ENCODE measurements at regions of chr12 and their contacts with region 1.

Region 1: GRCh38 chr12:47032644-47033043 is 46.8 kb upstream of the PCED1B start:
- DNase-seq: peak; percentile 78
- H3K4me3 ChIP-seq: no peak overlapping the region
- H3K27ac ChIP-seq: no peak overlapping the region
- H3K4me1 ChIP-seq: no peaks in the 10 kb centered on the region
- H3K27me3 ChIP-seq: no peaks in the 10 kb centered on the region
- CTCF ChIP-seq: peak; percentile 71

Region 2: GRCh38 chr12:47071241-47071852 is 38.7 kb after region 1 on chr12:
- CTCF ChIA-PET with region 1: interaction called, 4 read pairs
- POLR2A ChIA-PET with region 1: no interaction called
- intact Hi-C with region 1: loop called (anchors 5 kb)
- DNase-seq: peak; percentile 55
- H3K4me3 ChIP-seq: no peak overlapping the region
- H3K27ac ChIP-seq: no peak overlapping the region
- H3K4me1 ChIP-seq: peaks cover 43% of the 10 kb centered on the region
- H3K27me3 ChIP-seq: no peaks in the 10 kb centered on the region
- CTCF ChIP-seq: peak; percentile 73

Region 3: GRCh38 chr12:47307680-47308399 is 275.2 kb after region 1 on chr12:
- CTCF ChIA-PET with region 1: interaction called, 16 read pairs
- POLR2A ChIA-PET with region 1: no interaction called
- intact Hi-C with region 1: loop called (anchors 2 kb)
- DNase-seq: peak; percentile 86
- H3K4me3 ChIP-seq: no peak overlapping the region
- H3K27ac ChIP-seq: no peak overlapping the region
- H3K4me1 ChIP-seq: no peaks in the 10 kb centered on the region
- H3K27me3 ChIP-seq: no peaks in the 10 kb centered on the region
- CTCF ChIP-seq: peak; percentile 82

Region 4: GRCh38 chr12:47397664-47398281 is 365.1 kb after region 1 on chr12:
- CTCF ChIA-PET with region 1: interaction called, 80 read pairs
- POLR2A ChIA-PET with region 1: interaction called, 4 read pairs
- intact Hi-C with region 1: loop called (anchors 2 kb)
- DNase-seq: peak; percentile 87
- H3K4me3 ChIP-seq: no peak overlapping the region
- H3K27ac ChIP-seq: no peak overlapping the region
- H3K4me1 ChIP-seq: peaks cover 10% of the 10 kb centered on the region
- H3K27me3 ChIP-seq: no peaks in the 10 kb centered on the region
- CTCF ChIP-seq: peak; percentile 90

Region 5: GRCh38 chr12:47547085-47547484 is 514.4 kb after region 1 on chr12:
- CTCF ChIA-PET with region 1: no interaction called
- POLR2A ChIA-PET with region 1: no interaction called
- intact Hi-C with region 1: loop called (anchors 10 kb)
- DNase-seq: peak; percentile 47
- H3K4me3 ChIP-seq: no peak overlapping the region
- H3K27ac ChIP-seq: no peak overlapping the region
- H3K4me1 ChIP-seq: no peaks in the 10 kb centered on the region
- H3K27me3 ChIP-seq: no peaks in the 10 kb centered on the region
- CTCF ChIP-seq: peak; percentile 68

Region 6: DNA sequence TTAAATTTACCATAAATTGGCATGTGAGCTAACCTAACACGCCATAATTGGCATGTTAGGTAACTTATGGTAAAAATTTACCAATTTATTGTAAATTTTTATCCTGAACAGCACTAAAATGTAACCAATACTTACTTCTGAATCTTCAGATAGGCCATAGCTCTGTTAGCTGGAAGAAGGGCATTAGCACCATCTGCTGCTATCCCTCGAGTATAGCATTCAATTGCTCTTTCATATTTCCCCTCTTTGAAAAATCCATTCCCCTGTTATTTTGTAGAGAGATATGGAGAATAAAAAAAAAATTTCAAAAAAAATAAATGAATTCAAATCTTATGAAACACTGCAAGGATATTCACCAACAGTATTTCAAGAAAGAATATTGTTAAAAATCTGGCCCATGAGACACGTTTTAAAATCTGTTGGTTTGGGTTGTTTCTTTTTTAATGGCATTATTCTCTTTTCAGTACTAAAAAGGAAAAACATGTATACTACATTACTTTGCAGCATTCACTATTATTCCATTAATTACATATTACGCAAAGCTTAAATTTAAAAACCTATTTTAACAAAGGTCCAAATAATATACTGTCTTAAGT is 654.1 kb after region 1 on chr12:
- CTCF ChIA-PET with region 1: no interaction called
- POLR2A ChIA-PET with region 1: no interaction called
- intact Hi-C with region 1: loop called (anchors 5 kb)
- DNase-seq: peak; percentile 52
- H3K4me3 ChIP-seq: no peak overlapping the region
- H3K27ac ChIP-seq: no peak overlapping the region
- H3K4me1 ChIP-seq: no peaks in the 10 kb centered on the region
- H3K27me3 ChIP-seq: no peaks in the 10 kb centered on the region
- CTCF ChIP-seq: peak; percentile 76